GM12878 (cell line): ENCODE measurements at regions of chr10 and their contacts with region 1.

Region 1: DNA sequence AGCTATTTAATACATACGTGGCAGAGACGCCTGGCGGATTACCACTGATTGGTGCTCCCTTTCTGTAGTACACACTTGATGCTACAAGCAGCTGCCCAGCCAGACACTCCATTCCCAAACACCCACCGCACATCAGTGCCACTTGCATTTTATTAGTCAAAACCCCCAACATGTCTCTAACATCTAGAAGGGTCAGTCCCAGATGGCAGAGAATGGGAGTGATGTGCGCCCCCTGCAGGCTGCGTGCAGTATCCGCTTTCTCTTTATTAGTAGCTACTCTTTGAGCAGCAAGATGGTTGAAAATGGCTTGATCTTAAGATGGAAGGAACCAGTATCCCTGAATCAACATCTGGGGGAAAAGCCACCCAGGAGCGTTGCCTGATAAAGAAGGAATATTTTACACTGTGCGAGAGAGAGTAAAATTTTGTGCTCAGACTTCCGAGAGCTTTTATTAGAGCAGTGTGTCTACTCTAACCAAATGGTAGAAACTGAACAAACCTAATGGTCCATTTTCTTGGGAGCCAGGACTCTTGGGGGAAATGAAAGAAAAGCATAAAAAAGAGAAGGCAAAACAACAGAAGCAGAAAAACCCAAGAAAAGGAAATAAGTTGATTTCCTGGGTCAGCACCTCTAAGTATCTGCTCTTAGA is 78.3 kb downstream of the ST8SIA6 start:
- DNase-seq: no peak
- ATAC-seq: peak; percentile 66
- H3K4me3 ChIP-seq: no peak overlapping the region
- H3K27ac ChIP-seq: no peak overlapping the region
- H3K4me1 ChIP-seq: no peaks in the 10 kb centered on the region
- H3K27me3 ChIP-seq: no peaks in the 10 kb centered on the region
- CTCF ChIP-seq: peak; percentile 42 to 78 (median 61)
- EP300 ChIP-seq: no peak
- POLR2A ChIP-seq: no peak
- RAD21 ChIP-seq: peak; percentile 27; the same call in 1 of the 2 replicates

Region 2: DNA sequence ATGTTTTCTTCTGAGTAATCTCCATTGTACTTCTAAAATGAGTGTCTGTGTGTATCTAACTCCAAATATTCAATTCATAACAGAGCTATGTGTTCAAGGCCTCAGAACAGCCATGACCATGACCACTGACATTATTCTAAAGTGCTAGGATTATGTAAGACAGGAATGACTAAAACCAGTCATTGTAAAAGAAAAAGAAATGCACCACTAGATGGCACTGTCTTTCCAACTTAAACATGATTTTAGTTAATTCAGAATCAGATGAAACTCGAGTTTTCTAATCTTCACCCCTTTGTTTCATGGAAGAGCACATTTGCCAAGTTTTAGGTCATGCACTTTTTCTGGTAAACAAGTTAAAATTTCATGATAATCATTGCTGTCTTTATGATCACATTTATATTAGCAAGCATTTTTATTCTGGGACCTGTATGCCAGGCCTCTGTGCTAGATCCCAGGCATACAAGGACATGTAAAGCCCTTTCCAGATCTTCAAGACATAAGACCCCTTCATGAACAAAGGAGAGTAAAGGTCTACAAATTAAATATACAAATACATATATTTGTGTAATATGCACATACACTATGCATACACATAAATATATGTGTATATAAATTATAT is 532.7 kb before region 1 on chr10:
- CTCF ChIA-PET with region 1: no interaction called
- POLR2A ChIA-PET with region 1: no interaction called
- RAD21 ChIA-PET with region 1: no interaction called
- SMC1A ChIA-PET with region 1: no interaction called
- in situ Hi-C with region 1: no loop called
- intact Hi-C with region 1: loop called (anchors 1 kb)
- DNase-seq: peak; percentile 12
- ATAC-seq: peak; percentile 78
- H3K4me3 ChIP-seq: no peak overlapping the region
- H3K27ac ChIP-seq: no peak overlapping the region
- H3K4me1 ChIP-seq: no peaks in the 10 kb centered on the region
- H3K27me3 ChIP-seq: no peaks in the 10 kb centered on the region; a peak in 1 of 4 replicates
- CTCF ChIP-seq: peak; percentile 6 to 59 (median 58); a peak in 5 of 6 replicates
- EP300 ChIP-seq: no peak
- POLR2A ChIP-seq: no peak
- RAD21 ChIP-seq: peak; percentile 68

Region 3: GRCh38 chr10:17365402-17365801 is 10.7 kb before region 1 on chr10:
- CTCF ChIA-PET with region 1: interaction called, 45 read pairs
- POLR2A ChIA-PET with region 1: interaction called, 6 read pairs
- RAD21 ChIA-PET with region 1: no interaction called
- SMC1A ChIA-PET with region 1: interaction called, 4 read pairs
- in situ Hi-C with region 1: no loop called
- intact Hi-C with region 1: no loop called
- DNase-seq: no peak
- ATAC-seq: no peak
- H3K4me3 ChIP-seq: no peak overlapping the region
- H3K27ac ChIP-seq: no peak overlapping the region
- H3K4me1 ChIP-seq: no peaks in the 10 kb centered on the region
- H3K27me3 ChIP-seq: no peaks in the 10 kb centered on the region; a peak in 2 of 4 replicates
- CTCF ChIP-seq: no peak
- EP300 ChIP-seq: no peak
- POLR2A ChIP-seq: no peak
- RAD21 ChIP-seq: no peak

Region 4: DNA sequence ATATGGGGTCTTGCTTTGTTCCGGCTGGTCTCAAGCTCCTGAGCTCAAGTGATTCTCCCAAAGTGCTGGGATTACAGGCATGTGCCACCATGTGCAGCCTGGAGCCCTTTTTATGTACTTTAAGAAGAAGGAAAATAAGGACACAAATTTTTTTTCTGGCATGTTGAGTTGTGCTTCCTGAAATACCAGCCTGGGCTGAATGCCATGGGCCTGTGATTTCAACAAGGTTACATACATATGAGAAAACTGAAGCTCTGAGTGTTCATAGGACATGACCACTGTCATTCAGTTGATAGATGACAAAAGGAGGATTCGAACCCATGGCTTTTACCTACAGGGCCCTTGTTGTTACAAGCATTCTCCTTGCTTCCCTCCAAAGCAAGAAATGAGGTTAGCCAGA is 42.2 kb after region 1 on chr10:
- CTCF ChIA-PET with region 1: no interaction called
- POLR2A ChIA-PET with region 1: no interaction called
- RAD21 ChIA-PET with region 1: no interaction called
- SMC1A ChIA-PET with region 1: no interaction called
- in situ Hi-C with region 1: no loop called
- intact Hi-C with region 1: no loop called
- DNase-seq: no peak
- ATAC-seq: no peak
- H3K4me3 ChIP-seq: no peak overlapping the region
- H3K27ac ChIP-seq: no peak overlapping the region
- H3K4me1 ChIP-seq: no peaks in the 10 kb centered on the region
- H3K27me3 ChIP-seq: 0 out of 4 replicates have a peak, but pooled peaks cover 0 to 3% of the 10 kb centered on the region in 2 experiments
- CTCF ChIP-seq: no peak
- EP300 ChIP-seq: no peak
- POLR2A ChIP-seq: no peak
- RAD21 ChIP-seq: no peak

Region 5: DNA sequence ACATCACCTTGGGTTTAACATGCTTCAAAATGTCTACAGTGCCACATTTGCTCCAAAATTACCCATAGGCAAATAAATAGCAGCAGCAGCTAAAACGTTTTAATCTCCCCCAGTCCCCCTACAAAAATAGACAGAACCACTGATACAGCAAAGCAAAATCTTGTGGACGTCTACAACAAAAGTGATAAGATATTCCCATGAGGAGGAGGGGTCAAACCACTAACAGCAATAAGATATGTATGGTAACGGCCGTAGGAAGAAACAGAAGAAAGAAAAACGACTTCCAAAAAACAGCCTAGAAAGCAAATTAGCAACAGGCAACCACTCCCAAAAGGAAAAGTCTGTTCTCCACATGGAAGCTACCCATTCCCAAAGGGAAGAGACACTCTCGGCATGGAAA is 112.8 kb after region 1 on chr10:
- CTCF ChIA-PET with region 1: no interaction called
- POLR2A ChIA-PET with region 1: no interaction called
- RAD21 ChIA-PET with region 1: no interaction called
- SMC1A ChIA-PET with region 1: no interaction called
- in situ Hi-C with region 1: no loop called
- intact Hi-C with region 1: no loop called
- DNase-seq: no peak
- ATAC-seq: no peak
- H3K4me3 ChIP-seq: no peak overlapping the region
- H3K27ac ChIP-seq: no peak overlapping the region
- H3K4me1 ChIP-seq: no peaks in the 10 kb centered on the region
- H3K27me3 ChIP-seq: no peaks in the 10 kb centered on the region; a peak in 1 of 4 replicates
- CTCF ChIP-seq: no peak
- EP300 ChIP-seq: no peak
- POLR2A ChIP-seq: no peak
- RAD21 ChIP-seq: no peak